ENCODE measurements at regions of chr7 and their contacts with region 1.

Region 1: GRCh38 chr7:134605973-134606923 is 40.4 kb upstream of the BPGM start:
- DNase-seq: peak; percentile 78
- H3K4me3 ChIP-seq: no peak overlapping the region
- H3K27ac ChIP-seq: no peak overlapping the region
- H3K4me1 ChIP-seq: peaks cover 13% of the 10 kb centered on the region
- H3K27me3 ChIP-seq: peaks cover 16% of the 10 kb centered on the region
- CTCF ChIP-seq: peak; percentile 95

Region 2: DNA sequence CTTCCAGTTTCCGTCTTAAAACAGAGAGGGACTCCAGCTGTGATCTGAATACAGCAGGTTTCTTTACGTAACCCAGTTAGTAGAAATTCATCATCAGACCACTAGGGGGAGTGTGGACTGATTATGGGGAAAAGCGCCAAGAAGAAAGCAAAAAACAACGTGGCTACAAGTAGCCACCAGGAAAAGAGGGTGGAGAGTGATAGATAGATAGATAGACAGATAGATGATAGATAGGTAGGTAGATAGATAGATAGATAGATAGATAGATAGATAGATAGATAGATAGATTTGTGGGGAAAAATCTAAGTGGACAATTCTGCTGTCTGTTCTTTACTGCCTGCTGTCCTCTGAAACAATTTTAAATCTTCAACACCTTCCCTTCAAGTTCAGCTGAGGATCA is 91.6 kb before region 1 on chr7:
- CTCF ChIA-PET with region 1: no interaction called
- POLR2A ChIA-PET with region 1: no interaction called
- intact Hi-C with region 1: loop called (anchors 1 kb)
- DNase-seq: peak; percentile 84
- H3K4me3 ChIP-seq: no peak overlapping the region
- H3K27ac ChIP-seq: no peak overlapping the region
- H3K4me1 ChIP-seq: no peaks in the 10 kb centered on the region
- H3K27me3 ChIP-seq: no peaks in the 10 kb centered on the region
- CTCF ChIP-seq: peak; percentile 79

Region 3: GRCh38 chr7:134646425-134647305 is 40.4 kb after region 1 on chr7 and contains the start of gene BPGM:
- CTCF ChIA-PET with region 1: no interaction called
- POLR2A ChIA-PET with region 1: interaction called, 10 read pairs
- intact Hi-C with region 1: no loop called
- DNase-seq: peak; percentile 100
- H3K4me3 ChIP-seq: peak within 1 kb of the TSS; percentile 58
- H3K27ac ChIP-seq: peak within 1 kb of the TSS; percentile 62
- H3K4me1 ChIP-seq: peaks cover 5% of the 10 kb centered on the region
- H3K27me3 ChIP-seq: no peaks in the 10 kb centered on the region
- CTCF ChIP-seq: peak; percentile 52
- total RNA-seq, gene BPGM: 13.8 and 14.0 TPM in 2 replicates